Activated CD4-positive, alpha-beta T cell treated with anti-CD3 and anti-CD28 coated beads for 36 hours (primary cell): ENCODE measurements at regions of chr4 and their contacts with region 1.

Region 1: DNA sequence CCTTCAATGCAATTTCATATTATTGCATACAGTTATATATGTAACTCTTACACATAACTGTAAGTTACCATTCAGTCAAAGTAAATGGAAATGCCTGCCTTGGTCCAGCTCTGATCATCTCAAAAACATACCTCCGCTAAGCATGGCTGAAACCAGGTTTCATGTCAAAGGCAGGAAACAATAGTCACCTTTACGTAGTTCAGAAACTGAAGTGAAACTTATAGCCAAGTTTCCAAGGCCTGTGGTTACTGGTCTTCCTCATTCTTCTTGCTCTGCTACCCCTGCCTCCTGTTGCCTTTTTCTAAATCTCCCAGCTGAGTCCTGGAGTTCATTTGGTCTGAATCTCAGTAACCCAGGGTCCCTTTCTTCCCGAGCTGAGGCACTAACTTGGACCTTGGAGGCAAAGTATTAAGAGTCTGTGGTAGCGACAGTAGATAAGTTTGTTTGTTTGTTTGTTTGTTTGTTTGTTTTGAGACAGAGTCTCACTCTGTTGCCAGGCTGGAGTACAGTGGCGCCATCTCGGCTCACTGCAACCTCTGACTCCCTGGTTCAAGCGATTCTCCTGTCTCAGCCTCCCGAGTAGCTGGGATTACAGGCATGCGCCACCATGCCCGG is 30.8 kb downstream of the DAPP1 start:
- DNase-seq: peak; percentile 46
- ATAC-seq: peak; percentile 37
- H3K4me3 Mint-ChIP-seq: peak overlapping the region; percentile 42
- H3K27ac Mint-ChIP-seq: peak overlapping the region; percentile 90
- H3K4me1 Mint-ChIP-seq: peaks cover 75% of the 10 kb centered on the region
- H3K27me3 Mint-ChIP-seq: no peaks in the 10 kb centered on the region

Region 2: GRCh38 chr4:99710681-99711345 is 136.7 kb before region 1 on chr4:
- CTCF ChIA-PET with region 1: no interaction called
- POLR2A ChIA-PET with region 1: interaction called, 12 read pairs
- intact Hi-C with region 1: loop called in 1 of 2 experiments (anchors 5 kb)
- DNase-seq: peak; percentile 5
- ATAC-seq: peak; percentile 100
- H3K4me3 Mint-ChIP-seq: no peak overlapping the region
- H3K27ac Mint-ChIP-seq: no peak overlapping the region
- H3K4me1 Mint-ChIP-seq: peaks cover 13% of the 10 kb centered on the region
- H3K27me3 Mint-ChIP-seq: peaks cover 11% of the 10 kb centered on the region

Region 3: GRCh38 chr4:99763635-99764101 is 83.8 kb before region 1 on chr4:
- CTCF ChIA-PET with region 1: no interaction called
- POLR2A ChIA-PET with region 1: interaction called, 4 read pairs
- intact Hi-C with region 1: loop called (anchors 2 to 5 kb)
- DNase-seq: peak; percentile 53
- ATAC-seq: peak; percentile 96
- H3K4me3 Mint-ChIP-seq: no peak overlapping the region
- H3K27ac Mint-ChIP-seq: no peak overlapping the region
- H3K4me1 Mint-ChIP-seq: peaks cover 34% of the 10 kb centered on the region
- H3K27me3 Mint-ChIP-seq: peaks cover 10% of the 10 kb centered on the region

Region 4: DNA sequence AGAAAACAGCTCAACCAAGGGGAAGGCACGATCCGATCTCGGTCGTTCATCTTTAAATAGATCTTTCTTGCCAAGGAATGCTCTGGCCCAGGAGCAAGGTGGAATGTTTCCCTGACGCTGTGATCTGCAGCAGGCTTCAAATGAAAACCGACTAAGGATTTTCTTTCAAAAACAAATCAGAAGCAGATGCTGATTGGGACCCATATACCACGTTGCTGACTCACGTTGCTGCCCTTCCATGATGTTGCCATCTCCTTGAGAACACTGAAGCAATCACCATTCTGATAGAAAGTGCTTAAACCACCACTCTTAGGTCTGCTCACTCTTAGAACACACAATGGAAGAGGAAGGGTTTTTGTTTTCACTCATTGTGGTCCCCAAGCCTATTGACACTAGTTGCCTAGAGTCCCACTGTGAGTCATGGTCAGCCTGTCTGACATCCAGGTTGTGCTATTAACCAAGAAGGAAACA is 20.7 kb after region 1 on chr4:
- CTCF ChIA-PET with region 1: interaction called, 3 read pairs
- POLR2A ChIA-PET with region 1: no interaction called
- intact Hi-C with region 1: loop called (anchors 1 kb)
- DNase-seq: peak; percentile 49
- ATAC-seq: peak; percentile 95
- H3K4me3 Mint-ChIP-seq: no peak overlapping the region
- H3K27ac Mint-ChIP-seq: peak overlapping the region; percentile 72
- H3K4me1 Mint-ChIP-seq: peaks cover 12% of the 10 kb centered on the region
- H3K27me3 Mint-ChIP-seq: no peaks in the 10 kb centered on the region

Region 5: GRCh38 chr4:100060765-100061416 is 213.4 kb after region 1 on chr4:
- CTCF ChIA-PET with region 1: no interaction called
- POLR2A ChIA-PET with region 1: no interaction called
- intact Hi-C with region 1: no loop called
- DNase-seq: no peak
- ATAC-seq: no peak
- H3K4me3 Mint-ChIP-seq: no peak overlapping the region
- H3K27ac Mint-ChIP-seq: no peak overlapping the region
- H3K4me1 Mint-ChIP-seq: no peaks in the 10 kb centered on the region
- H3K27me3 Mint-ChIP-seq: peaks cover 7% of the 10 kb centered on the region